ENCODE measurements at regions of chr4 and their contacts with region 1.

Region 1: GRCh38 chr4:6885951-6886557 is 23.6 kb upstream of the TBC1D14 start:
- DNase-seq: peak; percentile 81 to 96 (median 93)
- H3K4me3 ChIP-seq: no peak overlapping the region
- H3K27ac ChIP-seq: no peak overlapping the region
- H3K4me1 ChIP-seq: peaks cover 6 to 52% (median 48%) of the 10 kb centered on the region in 4 experiments
- H3K27me3 ChIP-seq: no peaks in the 10 kb centered on the region

Region 2: GRCh38 chr4:6768539-6768905 is 117.5 kb before region 1 on chr4:
- CTCF ChIA-PET with region 1: no interaction called
- POLR2A ChIA-PET with region 1: no interaction called
- DNase-seq: peak in 2 of 3 donors; percentile 58
- H3K4me3 ChIP-seq: no peak overlapping the region
- H3K27ac ChIP-seq: no peak overlapping the region
- H3K4me1 ChIP-seq: peaks cover 0 to 12% (median 1%) of the 10 kb centered on the region in 4 experiments
- H3K27me3 ChIP-seq: peaks cover 0 to 2% (median 0%) of the 10 kb centered on the region in 5 experiments

Region 3: DNA sequence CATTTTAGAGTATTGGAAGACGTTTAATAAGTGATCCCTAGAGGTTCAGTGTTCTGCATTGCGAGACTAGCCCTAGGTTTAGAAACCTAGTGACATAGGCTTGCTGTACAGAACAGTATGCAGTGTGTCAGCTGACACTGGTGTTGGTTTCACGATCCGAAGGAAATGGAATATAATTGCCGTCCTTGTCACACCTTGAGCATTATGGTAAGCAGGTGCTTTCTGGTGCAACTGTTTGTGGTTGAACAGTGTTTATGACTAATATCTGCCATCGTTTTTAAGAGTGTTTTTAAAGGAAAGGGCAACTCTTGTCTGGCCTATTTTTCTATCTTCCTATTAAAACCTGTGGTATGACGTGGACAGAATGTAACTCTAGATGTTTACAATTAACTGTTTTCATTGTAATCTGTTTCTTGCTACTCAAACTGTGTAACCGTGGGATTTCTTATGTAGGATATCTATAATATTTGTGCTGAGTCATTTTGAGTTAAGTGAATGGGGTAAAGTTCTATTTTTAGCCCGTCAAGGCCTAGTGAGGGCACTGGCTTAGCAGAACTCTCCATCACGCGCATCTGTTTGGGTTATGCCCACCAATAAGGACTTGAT is 30.3 kb before region 1 on chr4:
- CTCF ChIA-PET with region 1: no interaction called
- POLR2A ChIA-PET with region 1: no interaction called
- DNase-seq: peak; percentile 16 to 80 (median 64)
- H3K4me3 ChIP-seq: peak overlapping the region in 2 of 7 experiments; percentile 18 to 33
- H3K27ac ChIP-seq: no peak overlapping the region
- H3K4me1 ChIP-seq: peaks cover 0 to 26% (median 11%) of the 10 kb centered on the region in 4 experiments
- H3K27me3 ChIP-seq: no peaks in the 10 kb centered on the region

Region 4: DNA sequence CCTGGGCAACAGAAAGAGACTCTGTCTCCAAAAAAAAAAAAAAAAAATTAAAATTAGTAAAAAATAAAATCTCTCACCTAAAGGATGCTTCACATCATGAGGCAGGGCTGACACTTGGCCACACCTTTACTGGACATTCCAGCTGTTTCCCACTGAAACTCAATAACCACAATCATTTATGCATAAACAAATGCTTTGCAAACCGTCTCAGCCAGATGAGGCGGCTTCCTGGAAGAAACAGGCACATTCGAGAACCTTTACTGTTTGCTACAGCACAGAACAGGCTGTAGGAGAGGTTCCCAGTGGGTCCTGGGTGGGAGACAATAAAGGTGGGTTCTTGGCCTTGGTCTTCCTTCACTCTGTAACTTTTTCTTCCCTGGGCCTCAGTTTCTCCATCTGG is 12.7 kb after region 1 on chr4:
- CTCF ChIA-PET with region 1: interaction called, 13 read pairs
- POLR2A ChIA-PET with region 1: no interaction called
- DNase-seq: no peak
- H3K4me3 ChIP-seq: no peak overlapping the region
- H3K27ac ChIP-seq: no peak overlapping the region
- H3K4me1 ChIP-seq: peaks cover 1 to 30% (median 4%) of the 10 kb centered on the region in 4 experiments
- H3K27me3 ChIP-seq: peaks cover 0 to 2% (median 0%) of the 10 kb centered on the region in 5 experiments

Region 5: DNA sequence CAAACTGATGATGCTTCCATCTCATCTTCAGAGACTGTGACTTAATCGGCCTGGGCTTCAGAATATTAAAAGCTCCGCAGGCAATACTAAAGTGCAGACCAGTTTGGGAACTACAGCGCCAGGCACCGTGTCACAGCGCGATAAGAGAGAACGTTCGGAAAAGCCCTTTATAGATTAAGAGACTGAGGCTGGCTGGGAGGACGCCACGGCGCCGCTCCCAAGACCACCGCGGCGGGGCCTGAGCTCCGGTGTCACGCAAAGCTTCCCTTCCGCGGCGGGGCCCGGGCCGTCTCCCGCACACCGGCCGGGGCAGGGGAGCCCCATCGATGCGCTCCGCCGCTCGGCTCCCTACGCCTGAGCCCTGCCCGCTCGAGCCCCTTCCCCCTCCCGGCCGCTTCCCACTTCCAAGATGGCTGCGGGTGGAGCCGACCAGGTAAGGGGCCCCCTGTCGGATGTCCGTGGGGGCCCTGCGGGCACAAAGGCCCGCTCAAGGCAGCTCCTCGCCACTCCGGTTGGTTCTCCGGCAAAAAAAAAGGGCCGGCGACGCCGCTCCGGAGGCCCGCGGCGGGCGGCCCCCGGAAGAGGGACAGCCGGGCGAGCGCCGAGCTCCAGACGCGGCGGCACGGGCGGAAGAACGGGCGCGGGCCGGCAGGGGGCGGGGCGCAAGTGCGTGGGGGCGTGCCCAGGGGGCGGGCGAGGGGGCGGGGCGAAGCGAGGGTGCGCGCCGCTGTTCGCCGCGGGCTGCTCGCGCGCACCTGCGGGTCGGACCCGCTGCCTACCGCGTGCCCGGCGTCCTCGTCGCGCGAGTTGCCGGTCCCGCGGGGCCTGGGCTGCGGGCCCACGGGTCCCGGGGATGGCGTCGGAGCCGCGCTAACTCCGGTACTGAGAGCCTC is 23.3 kb after region 1 on chr4 and contains the start of gene TBC1D14:
- CTCF ChIA-PET with region 1: interaction called, 16 read pairs
- POLR2A ChIA-PET with region 1: interaction called, 4 read pairs
- DNase-seq: peak; percentile 87 to 91 (median 88)
- H3K4me3 ChIP-seq: peak within 1 kb of the TSS; percentile 71 to 91 (median 83)
- H3K27ac ChIP-seq: peak within 1 kb of the TSS; percentile 89 to 96
- H3K4me1 ChIP-seq: peaks cover 5 to 52% (median 44%) of the 10 kb centered on the region in 4 experiments
- H3K27me3 ChIP-seq: peaks cover 0 to 16% (median 4%) of the 10 kb centered on the region in 5 experiments